Heart left ventricle (tissue), 16 donors: ENCODE measurements at regions of chr3 and their contacts with region 1.

Region 1: DNA sequence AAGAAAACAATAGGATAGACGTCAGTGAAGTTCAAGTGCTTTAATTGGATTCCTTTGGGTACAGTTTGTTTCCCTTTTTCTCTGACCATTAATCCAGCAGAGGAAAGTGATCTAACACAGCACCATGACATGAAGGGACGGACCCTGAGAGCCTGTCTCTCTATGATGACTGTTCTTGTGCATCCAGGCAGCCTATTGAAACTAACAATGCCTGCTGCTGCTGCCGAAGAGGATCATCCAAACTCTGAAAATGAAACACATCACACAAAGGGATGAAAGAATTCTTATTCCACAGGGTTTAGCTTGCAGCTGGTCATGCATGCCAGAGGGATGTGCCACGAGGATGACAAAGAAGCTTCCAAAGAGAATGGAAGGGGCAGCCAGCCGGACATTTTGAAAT is 75.5 kb downstream of the ZBTB20 start:
- DNase-seq: peak in 1 of 5 donors; percentile 25
- ATAC-seq: peak; percentile 63 to 92 (median 73)
- H3K4me3 ChIP-seq: peak overlapping the region in 3 of 12 donors; percentile 7 to 10 (median 8)
- H3K27ac ChIP-seq: peak overlapping the region; percentile 19 to 78 (median 56)
- H3K4me1 ChIP-seq: peaks cover 3 to 56% (median 33%) of the 10 kb centered on the region in 12 donors
- H3K27me3 ChIP-seq: no peaks in the 10 kb centered on the region
- CTCF ChIP-seq: no peak
- POLR2A ChIP-seq: no peak

Region 2: GRCh38 chr3:115040673-115041286 is 30.8 kb before region 1 on chr3:
- intact Hi-C with region 1: loop called in 1 of 10 experiments (anchors 2 kb)
- DNase-seq: peak in 2 of 5 donors; percentile 8 to 26
- ATAC-seq: peak in 1 of 4 donors; percentile 41
- H3K4me3 ChIP-seq: no peak overlapping the region
- H3K27ac ChIP-seq: no peak overlapping the region
- H3K4me1 ChIP-seq: peaks cover 0 to 23% (median 4%) of the 10 kb centered on the region in 12 donors
- H3K27me3 ChIP-seq: no peaks in the 10 kb centered on the region
- CTCF ChIP-seq: peak; percentile 41 to 72 (median 61)
- POLR2A ChIP-seq: no peak